Activated B cell treated with CpG ODN at 0.5 μM for 24 hours (primary cell): ENCODE measurements at regions of chr5 and their contacts with region 1.

Region 1: DNA sequence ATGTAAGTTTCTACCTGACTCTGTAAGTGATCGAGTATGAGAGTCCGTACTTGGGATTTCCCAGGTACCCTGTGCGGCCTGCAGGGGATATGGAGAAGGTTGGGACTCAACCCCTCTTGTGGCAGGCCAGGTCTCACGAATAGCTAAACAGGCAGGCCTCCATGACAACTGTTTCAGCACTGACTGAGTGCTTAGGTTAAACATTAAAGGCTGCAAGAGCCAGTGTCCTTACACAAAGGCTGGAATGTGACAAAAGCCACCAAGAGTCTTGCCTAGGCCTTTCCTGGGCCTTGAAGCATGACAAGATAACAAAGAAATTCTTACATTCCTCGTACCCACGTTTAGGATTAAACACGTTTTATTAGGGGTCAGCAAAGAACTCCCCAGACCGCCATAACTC is 58.6 kb downstream of the THBS4 start:
- DNase-seq: no peak
- ATAC-seq: no peak
- H3K4me3 Mint-ChIP-seq: no peak overlapping the region
- H3K27ac Mint-ChIP-seq: no peak overlapping the region
- H3K4me1 Mint-ChIP-seq: no peaks in the 10 kb centered on the region
- H3K27me3 Mint-ChIP-seq: no peaks in the 10 kb centered on the region
- CTCF ChIP-seq: no peak

Region 2: GRCh38 chr5:80216096-80216495 is 122.3 kb after region 1 on chr5:
- CTCF ChIA-PET with region 1: no interaction called
- POLR2A ChIA-PET with region 1: no interaction called
- intact Hi-C with region 1: no loop called
- DNase-seq: no peak
- ATAC-seq: no peak
- H3K4me3 Mint-ChIP-seq: no peak overlapping the region
- H3K27ac Mint-ChIP-seq: no peak overlapping the region
- H3K4me1 Mint-ChIP-seq: peaks cover 7% of the 10 kb centered on the region
- H3K27me3 Mint-ChIP-seq: no peaks in the 10 kb centered on the region
- CTCF ChIP-seq: no peak

Region 3: DNA sequence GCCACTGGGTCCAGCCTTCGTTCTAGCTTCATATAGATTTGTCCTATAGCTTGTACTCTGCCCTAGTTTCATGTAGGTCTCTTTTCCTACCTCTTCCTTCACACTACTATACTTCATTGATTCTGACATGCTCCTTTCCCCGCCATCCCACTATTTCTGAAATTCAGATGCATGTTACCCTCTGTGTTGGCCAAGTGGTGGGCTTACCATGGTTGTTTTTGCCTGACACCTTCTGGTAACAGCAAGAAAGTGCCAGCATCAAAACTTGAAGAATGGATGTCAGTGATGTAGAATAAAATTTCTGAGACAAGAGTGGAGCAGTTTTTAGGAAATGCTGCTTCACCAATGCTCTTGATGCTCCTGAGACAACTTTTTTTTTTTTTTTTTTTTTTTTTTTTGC is 181.6 kb after region 1 on chr5:
- CTCF ChIA-PET with region 1: interaction called, 32 read pairs
- POLR2A ChIA-PET with region 1: interaction called, 8 read pairs
- intact Hi-C with region 1: loop called (anchors 1 kb)
- DNase-seq: no peak
- ATAC-seq: no peak
- H3K4me3 Mint-ChIP-seq: no peak overlapping the region
- H3K27ac Mint-ChIP-seq: no peak overlapping the region
- H3K4me1 Mint-ChIP-seq: peaks cover 1% of the 10 kb centered on the region
- H3K27me3 Mint-ChIP-seq: no peaks in the 10 kb centered on the region
- CTCF ChIP-seq: no peak

Region 4: GRCh38 chr5:80308526-80308925 is 214.7 kb after region 1 on chr5:
- CTCF ChIA-PET with region 1: interaction called, 171 read pairs
- POLR2A ChIA-PET with region 1: interaction called, 6 read pairs
- intact Hi-C with region 1: loop called (anchors 1 kb)
- DNase-seq: no peak
- ATAC-seq: no peak
- H3K4me3 Mint-ChIP-seq: no peak overlapping the region
- H3K27ac Mint-ChIP-seq: no peak overlapping the region
- H3K4me1 Mint-ChIP-seq: no peaks in the 10 kb centered on the region
- H3K27me3 Mint-ChIP-seq: no peaks in the 10 kb centered on the region
- CTCF ChIP-seq: no peak